ENCODE measurements at regions of chr16 and their contacts with region 1.

Region 1: GRCh38 chr16:57422026-57422944 is 17.7 kb downstream of the CCL17 start:
- DNase-seq: no peak
- H3K4me3 ChIP-seq: no peak overlapping the region
- H3K27ac ChIP-seq: no peak overlapping the region
- H3K4me1 ChIP-seq: peaks cover 6 to 11% of the 10 kb centered on the region in 2 donors
- H3K27me3 ChIP-seq: no peaks in the 10 kb centered on the region
- CTCF ChIP-seq: peak in 2 of 3 donors; percentile 63 to 73
- POLR2A ChIP-seq: no peak

Region 2: DNA sequence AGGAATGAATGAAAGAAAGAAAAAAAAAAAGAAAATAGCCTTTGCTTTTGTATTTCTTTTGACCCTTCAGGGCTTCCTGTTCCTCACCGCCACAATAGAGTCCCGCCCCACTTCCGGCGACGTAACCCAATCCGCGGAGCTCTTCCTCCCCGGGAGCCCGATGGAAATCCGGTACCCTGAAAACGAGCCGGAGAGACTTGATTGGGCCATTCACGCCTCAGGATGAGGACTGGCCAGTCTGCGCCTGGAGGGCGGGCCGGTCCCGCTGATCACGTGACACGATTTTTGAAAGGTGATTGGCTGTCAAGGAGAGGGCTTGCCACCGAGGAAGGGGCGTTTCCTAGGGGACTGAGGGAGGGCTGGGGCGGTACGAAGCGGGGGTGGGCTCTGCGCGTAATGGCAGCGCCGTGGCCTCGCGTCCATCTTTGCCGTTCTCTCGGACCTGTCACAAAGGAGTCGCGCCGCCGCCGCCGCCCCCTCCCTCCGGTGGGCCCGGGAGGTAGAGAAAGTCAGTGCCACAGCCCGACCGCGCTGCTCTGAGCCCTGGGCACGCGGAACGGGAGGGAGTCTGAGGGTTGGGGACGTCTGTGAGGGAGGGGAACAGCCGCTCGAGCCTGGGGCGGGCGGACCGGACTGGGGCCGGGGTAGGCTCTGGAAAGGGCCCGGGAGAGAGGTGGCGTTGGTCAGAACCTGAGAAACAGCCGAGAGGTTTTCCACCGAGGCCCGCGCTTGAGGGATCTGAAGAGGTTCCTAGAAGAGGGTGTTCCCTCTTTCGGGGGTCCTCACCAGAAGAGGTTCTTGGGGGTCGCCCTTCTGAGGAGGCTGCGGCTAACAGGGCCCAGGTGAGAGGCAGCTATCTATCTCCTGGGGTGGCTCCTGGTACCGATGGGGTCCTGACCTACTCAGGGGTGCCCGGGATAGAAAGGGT is 236.1 kb before region 1 on chr16 and contains the starts of genes PSME3IP1 and RSPRY1:
- intact Hi-C with region 1: loop called (anchors 5 kb)
- DNase-seq: peak; percentile 99
- H3K4me3 ChIP-seq: peak within 1 kb of the TSS; percentile 87 to 96 (median 88)
- H3K27ac ChIP-seq: peak within 1 kb of the TSS; percentile 95 to 98
- H3K4me1 ChIP-seq: peaks cover 0 to 14% of the 10 kb centered on the region in 2 donors
- H3K27me3 ChIP-seq: no peaks in the 10 kb centered on the region
- CTCF ChIP-seq: peak in 1 of 3 donors; percentile 26
- POLR2A ChIP-seq: peak; percentile 76
- total RNA-seq, gene PSME3IP1: 64.8 to 81.4 (median 69.8) TPM
- total RNA-seq, gene RSPRY1: 26.4 to 52.4 (median 34.4) TPM

Region 3: GRCh38 chr16:57300387-57301125 is 121.7 kb before region 1 on chr16:
- intact Hi-C with region 1: loop called (anchors 1 kb)
- DNase-seq: peak; percentile 99 to 100
- H3K4me3 ChIP-seq: peak overlapping the region; percentile 40 to 70 (median 56)
- H3K27ac ChIP-seq: peak overlapping the region; percentile 91 to 97
- H3K4me1 ChIP-seq: peaks cover 10 to 17% of the 10 kb centered on the region in 2 donors
- H3K27me3 ChIP-seq: no peaks in the 10 kb centered on the region
- CTCF ChIP-seq: peak; percentile 94 to 99 (median 98)
- POLR2A ChIP-seq: no peak

Region 4: GRCh38 chr16:57432989-57433388 is 10.7 kb after region 1 on chr16:
- intact Hi-C with region 1: no loop called
- DNase-seq: no peak
- H3K4me3 ChIP-seq: no peak overlapping the region
- H3K27ac ChIP-seq: no peak overlapping the region
- H3K4me1 ChIP-seq: no peaks in the 10 kb centered on the region
- H3K27me3 ChIP-seq: no peaks in the 10 kb centered on the region
- CTCF ChIP-seq: no peak
- POLR2A ChIP-seq: no peak

Measured in breast epithelium (tissue), 4 donors.